ENCODE measurements at regions of chr11 and their contacts with region 1.

Region 1: GRCh38 chr11:12281571-12282478 is 95.5 kb upstream of the PARVA start:
- DNase-seq: peak; percentile 90 to 97
- H3K4me3 ChIP-seq: no peak overlapping the region
- CTCF ChIP-seq: peak in 1 of 3 donors; percentile 86
- POLR2A ChIP-seq: no peak

Region 2: DNA sequence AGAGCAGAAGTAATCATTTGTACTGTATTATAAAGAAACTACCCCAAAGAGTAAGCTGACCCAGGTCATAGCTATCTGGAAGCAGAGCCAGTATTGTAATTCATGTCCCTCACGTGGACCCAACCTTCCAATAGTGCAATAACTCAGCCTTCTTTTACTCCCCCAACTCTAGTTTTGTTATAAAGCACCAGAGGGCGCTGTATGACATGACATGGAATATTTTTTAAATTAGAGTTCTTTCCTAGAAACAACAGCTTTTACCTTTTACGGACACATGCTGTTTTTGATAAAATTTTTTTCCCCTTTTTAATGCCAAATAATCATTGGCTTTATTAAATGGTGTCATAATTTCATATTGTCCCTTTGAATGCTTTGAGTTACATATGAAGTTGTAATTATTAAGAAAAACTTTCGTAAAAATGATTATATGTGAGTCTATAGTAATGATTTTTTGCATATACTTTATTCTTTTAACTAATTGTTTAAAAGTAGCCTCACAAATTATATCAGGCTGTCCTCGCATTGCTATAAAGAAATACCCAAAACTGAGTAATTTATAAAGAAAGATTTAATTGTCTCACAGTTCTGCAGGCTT is 350.3 kb before region 1 on chr11:
- intact Hi-C with region 1: loop called (anchors 5 kb)
- DNase-seq: peak in 1 of 2 donors; percentile 21
- H3K4me3 ChIP-seq: no peak overlapping the region
- CTCF ChIP-seq: no peak
- POLR2A ChIP-seq: no peak